ENCODE measurements at regions of chr5 and their contacts with region 1.

Region 1: DNA sequence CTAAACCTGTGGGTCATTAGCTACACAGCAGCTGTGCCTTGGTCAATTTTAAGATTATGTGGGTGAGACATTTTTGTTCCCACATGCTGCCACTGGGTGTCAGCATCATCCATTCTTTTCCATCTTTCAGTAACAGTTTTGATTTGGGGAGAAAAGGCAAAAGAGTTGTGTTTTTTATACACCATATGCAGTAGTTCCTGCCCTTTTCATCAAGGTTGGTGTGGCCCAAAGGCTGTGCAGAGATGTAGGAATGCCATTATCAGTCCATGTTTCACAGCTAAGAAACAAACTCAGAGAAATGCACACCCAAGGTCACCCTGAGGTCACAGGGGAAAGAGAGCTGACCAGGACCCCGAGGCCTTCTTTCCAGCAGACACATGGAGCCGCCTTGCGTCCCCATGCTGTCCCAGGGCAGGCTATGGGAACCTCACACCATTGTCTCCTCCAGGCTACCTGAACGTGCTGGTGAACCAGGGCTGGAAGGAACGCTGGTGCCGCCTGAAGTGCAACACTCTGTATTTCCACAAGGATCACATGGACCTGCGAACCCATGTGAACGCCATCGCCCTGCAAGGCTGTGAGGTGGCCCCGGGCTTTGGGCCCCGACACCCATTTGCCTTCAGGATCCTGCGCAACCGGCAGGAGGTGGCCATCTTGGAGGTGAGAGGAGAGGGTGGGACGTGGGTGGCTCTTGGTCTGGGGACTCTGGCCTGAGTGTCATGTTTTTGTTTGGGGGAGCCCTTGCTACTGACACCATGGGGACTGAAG is 27.8 kb upstream of the GRPEL2 start:
- DNase-seq: peak; percentile 80
- H3K4me3 Mint-ChIP-seq: no peak overlapping the region
- H3K27ac Mint-ChIP-seq: no peak overlapping the region
- H3K4me1 Mint-ChIP-seq: no peaks in the 10 kb centered on the region
- H3K27me3 Mint-ChIP-seq: no peaks in the 10 kb centered on the region

Region 2: GRCh38 chr5:149367249-149367971 is 49.9 kb after region 1 on chr5:
- intact Hi-C with region 1: loop called (anchors 1 kb)
- DNase-seq: peak; percentile 87
- H3K4me3 Mint-ChIP-seq: no peak overlapping the region
- H3K27ac Mint-ChIP-seq: no peak overlapping the region
- H3K4me1 Mint-ChIP-seq: no peaks in the 10 kb centered on the region
- H3K27me3 Mint-ChIP-seq: no peaks in the 10 kb centered on the region

Region 3: DNA sequence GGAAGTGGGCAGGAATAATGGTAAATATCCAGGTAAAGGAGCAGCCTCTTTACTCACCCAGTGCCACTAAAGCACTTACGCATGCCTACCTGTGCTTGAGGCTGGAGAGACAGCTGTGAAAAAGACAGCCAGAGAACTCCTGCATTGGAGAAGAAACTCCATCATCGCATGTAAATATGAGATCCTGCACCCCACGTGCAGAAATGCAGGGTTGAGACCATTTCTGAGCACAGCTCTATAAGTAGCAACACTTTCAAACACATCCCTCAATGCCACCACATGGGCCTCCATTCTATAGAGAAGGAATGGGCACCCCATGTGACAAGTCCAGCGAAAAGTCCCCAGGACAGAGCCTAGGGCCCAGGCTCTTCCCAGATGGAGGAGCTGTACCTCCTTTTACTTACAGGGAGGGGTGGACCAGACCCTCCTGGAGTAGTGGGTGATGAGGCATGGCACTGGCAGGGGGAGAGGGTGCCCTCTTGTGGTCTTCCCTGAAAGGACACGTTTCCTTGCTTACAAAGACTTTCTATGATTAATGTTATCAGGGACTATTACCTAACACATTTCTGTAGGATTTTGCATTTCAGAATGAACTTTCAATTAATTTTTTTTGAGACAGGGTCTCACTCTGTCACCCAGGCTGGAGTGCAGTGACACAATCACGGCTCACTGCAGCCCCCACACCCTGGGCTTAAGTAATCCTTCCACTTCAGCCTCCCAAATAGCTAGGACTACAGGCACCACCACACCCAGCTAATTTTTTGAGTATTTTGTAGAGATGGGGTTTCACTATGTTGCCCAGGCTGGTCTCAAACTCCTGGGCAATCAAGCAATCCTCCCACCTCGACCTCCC is 116.9 kb after region 1 on chr5:
- intact Hi-C with region 1: loop called (anchors 5 kb)
- DNase-seq: peak; percentile 85
- H3K4me3 Mint-ChIP-seq: no peak overlapping the region
- H3K27ac Mint-ChIP-seq: no peak overlapping the region
- H3K4me1 Mint-ChIP-seq: peaks cover 17% of the 10 kb centered on the region
- H3K27me3 Mint-ChIP-seq: peaks cover 4% of the 10 kb centered on the region

Measured in activated CD4-positive, alpha-beta T cell treated with anti-CD3 and anti-CD28 coated beads, Interleukin-2, amount 10 ng/mL, durations not matched to agents 24 days and 14 days (primary cell).